Panc1 (cell line): ENCODE measurements at regions of chr10 and their contacts with region 1.

Region 1: GRCh38 chr10:118310822-118311221 is 31.3 kb downstream of the FAM204A start:
- DNase-seq: no peak
- ATAC-seq: peak; percentile 45; the same call in 1 of the 2 replicates
- H3K4me3 ChIP-seq: no peak overlapping the region
- H3K27ac ChIP-seq: no peak overlapping the region; the same call in 1 of the 2 replicates
- H3K4me1 ChIP-seq: peaks cover 12% of the 10 kb centered on the region; the same call in 1 of the 2 replicates
- H3K27me3 ChIP-seq: no peaks in the 10 kb centered on the region
- CTCF ChIP-seq: no peak

Region 2: DNA sequence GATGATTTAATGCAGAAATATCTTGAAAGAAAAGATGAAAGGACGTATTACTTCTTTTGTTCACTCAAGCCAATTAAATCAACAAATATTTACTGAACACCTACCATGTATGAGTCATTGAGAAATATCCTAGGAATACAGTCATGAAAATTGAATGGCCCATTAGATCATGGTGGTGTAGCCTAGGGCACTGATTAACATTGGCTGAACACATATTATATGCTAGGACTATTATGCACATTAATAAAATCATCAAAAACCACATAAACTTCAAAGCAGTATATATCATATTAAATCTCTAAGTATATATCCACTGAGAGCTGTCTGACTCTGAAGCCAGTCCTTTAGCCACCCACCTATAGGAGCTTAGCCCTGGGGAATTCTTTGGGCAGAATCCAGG is 10.5 kb before region 1 on chr10:
- CTCF ChIA-PET with region 1: interaction called, 10 read pairs
- POLR2A ChIA-PET with region 1: interaction called, 7 read pairs
- in situ Hi-C with region 1: no loop called
- intact Hi-C with region 1: no loop called
- DNase-seq: no peak
- ATAC-seq: no peak
- H3K4me3 ChIP-seq: no peak overlapping the region
- H3K27ac ChIP-seq: no peak overlapping the region
- H3K4me1 ChIP-seq: no peaks in the 10 kb centered on the region
- H3K27me3 ChIP-seq: no peaks in the 10 kb centered on the region
- CTCF ChIP-seq: no peak

Region 3: GRCh38 chr10:118531105-118531852 is 220.5 kb after region 1 on chr10:
- CTCF ChIA-PET with region 1: no interaction called
- POLR2A ChIA-PET with region 1: no interaction called
- in situ Hi-C with region 1: no loop called
- intact Hi-C with region 1: no loop called
- DNase-seq: no peak
- ATAC-seq: no peak
- H3K4me3 ChIP-seq: no peak overlapping the region
- H3K27ac ChIP-seq: no peak overlapping the region
- H3K4me1 ChIP-seq: no peaks in the 10 kb centered on the region
- H3K27me3 ChIP-seq: peaks cover 7% of the 10 kb centered on the region
- CTCF ChIP-seq: no peak